Activated T-helper 1 cell treated with anti-CD3 and anti-CD28 coated beads, Interleukin-12 subunit alpha, Interleukin-12 subunit beta, Interleukin-2, Interleukin-4 antibody, amounts not matched to agents 30 ng/mL and 10 ng/mL and 1 ng/mL, durations not matched to agents 14 hours and 24 hours and 36 hours (primary cell): ENCODE measurements at regions of chr14 and their contacts with region 1.

Region 1: DNA sequence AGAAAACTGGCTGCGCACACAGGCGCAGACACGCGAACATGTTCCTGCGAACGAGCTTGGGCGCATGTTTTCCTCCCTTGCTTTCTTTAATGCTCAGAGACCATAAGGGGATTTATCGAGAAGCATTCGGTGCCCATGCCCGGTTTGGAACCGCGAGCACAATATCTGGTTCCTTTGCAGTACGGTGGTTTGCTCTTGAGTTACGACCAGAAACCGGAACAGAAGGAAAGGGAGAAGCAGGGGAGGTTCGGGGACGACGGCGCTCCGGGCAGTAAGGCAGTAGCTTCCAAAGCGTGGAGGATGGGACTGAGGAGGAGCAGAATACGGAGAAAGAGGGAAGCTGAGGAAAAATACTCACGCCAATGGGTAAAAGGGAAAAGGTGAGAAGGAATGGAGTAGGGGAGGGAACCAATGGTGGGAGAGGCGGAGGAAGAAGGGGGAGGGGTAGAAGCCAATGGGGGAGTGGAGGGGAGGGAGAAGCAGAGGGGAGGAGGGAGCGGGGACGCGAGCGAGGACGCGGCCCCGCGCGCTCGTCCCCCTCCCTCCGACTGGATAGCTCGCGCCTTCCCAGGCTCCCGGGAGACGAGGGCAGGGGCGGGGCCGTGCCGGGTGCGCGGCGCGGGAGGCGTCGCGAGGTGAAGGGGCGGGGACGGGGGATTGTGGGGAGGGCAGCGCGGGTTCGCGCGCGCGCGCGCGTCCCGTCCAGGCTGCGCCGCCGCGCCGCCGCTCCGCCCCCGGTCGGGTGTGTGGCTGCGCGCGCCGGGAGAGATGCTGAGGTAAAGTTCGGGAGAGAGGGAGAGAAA is 625 bp upstream of the ARHGAP5 start:
- DNase-seq: peak; percentile 71
- H3K4me3 Mint-ChIP-seq: peak overlapping the region; percentile 96
- H3K27ac Mint-ChIP-seq: peak overlapping the region; percentile 96
- H3K4me1 Mint-ChIP-seq: peaks cover 42% of the 10 kb centered on the region
- H3K27me3 Mint-ChIP-seq: peaks cover 25% of the 10 kb centered on the region

Region 2: DNA sequence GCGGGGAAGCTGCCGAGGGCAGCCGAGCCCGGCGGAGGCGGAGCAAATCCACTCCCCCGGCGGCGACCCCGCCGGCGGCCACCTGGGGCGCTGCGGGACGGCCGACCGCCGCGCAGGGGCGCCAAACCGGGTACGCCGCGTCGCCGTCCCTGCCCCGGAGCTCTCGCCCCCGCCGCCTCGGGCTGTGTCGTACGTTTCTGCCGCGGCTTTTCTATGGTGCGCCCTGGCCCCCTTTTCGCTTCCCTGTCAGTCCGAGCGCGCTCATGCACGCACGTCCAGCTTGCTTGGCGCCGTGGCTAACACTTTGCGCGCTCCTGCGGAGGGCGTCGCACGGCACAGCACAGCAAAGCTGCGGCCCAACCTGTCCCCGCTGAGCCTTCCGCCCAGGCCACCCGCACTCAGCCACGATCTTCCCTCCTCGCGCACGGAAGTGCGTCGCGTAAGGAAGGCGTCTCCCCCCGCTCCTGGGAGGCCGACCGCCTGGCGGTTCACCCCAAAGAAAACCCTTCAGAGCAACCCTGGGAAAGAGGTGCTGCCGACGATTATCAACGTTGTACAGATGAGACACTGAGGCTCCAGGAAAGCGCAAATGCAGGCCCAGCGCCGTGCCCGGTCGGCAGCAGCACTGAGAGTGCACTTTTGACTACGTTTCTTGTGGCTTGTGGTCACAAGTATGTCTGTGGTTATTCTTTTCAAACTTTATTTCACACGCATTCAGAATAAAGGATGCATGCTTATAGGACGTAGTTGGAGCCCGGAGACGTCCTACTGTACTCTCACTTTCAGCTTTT is 868.5 kb before region 1 on chr14 and contains the start of gene HECTD1:
- intact Hi-C with region 1: loop called (anchors 1 kb)
- DNase-seq: peak; percentile 85
- H3K4me3 Mint-ChIP-seq: peak within 1 kb of the TSS; percentile 95
- H3K27ac Mint-ChIP-seq: peak within 1 kb of the TSS; percentile 100
- H3K4me1 Mint-ChIP-seq: peaks cover 45% of the 10 kb centered on the region
- H3K27me3 Mint-ChIP-seq: peaks cover 3% of the 10 kb centered on the region
- total RNA-seq, gene HECTD1: 118 and 127 TPM in 2 replicates

Region 3: GRCh38 chr14:31456841-31457664 is 619.4 kb before region 1 on chr14 and contains the start of gene DTD2:
- intact Hi-C with region 1: loop called (anchors 1 kb)
- DNase-seq: peak; percentile 89
- H3K4me3 Mint-ChIP-seq: peak within 1 kb of the TSS; percentile 96
- H3K27ac Mint-ChIP-seq: peak within 1 kb of the TSS; percentile 95
- H3K4me1 Mint-ChIP-seq: peaks cover 43% of the 10 kb centered on the region
- H3K27me3 Mint-ChIP-seq: peaks cover 2% of the 10 kb centered on the region
- total RNA-seq, gene DTD2: 29.0 and 30.6 TPM in 2 replicates

Region 4: DNA sequence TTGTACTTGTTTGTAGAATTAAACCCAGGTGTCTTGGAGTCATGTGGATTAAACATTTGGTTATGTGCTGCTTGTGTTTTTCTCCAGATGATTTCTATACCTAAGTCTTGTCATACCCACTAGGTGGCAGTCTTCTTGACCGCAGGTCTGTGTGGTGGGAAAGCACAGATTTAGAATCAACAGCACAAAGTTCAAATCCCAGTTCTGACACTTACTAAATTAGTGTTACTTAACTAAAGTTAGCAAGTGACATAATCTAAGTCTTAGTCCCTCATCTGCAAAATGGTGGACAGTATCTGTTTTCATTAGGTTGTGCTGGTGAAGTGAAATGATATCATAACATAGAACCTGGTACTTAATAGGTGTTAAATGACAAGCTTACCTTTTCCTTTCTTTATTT is 150.4 kb before region 1 on chr14:
- intact Hi-C with region 1: loop called (anchors 2 kb)
- DNase-seq: no peak
- H3K4me3 Mint-ChIP-seq: no peak overlapping the region
- H3K27ac Mint-ChIP-seq: no peak overlapping the region
- H3K4me1 Mint-ChIP-seq: peaks cover 10% of the 10 kb centered on the region
- H3K27me3 Mint-ChIP-seq: peaks cover 2% of the 10 kb centered on the region

Region 5: DNA sequence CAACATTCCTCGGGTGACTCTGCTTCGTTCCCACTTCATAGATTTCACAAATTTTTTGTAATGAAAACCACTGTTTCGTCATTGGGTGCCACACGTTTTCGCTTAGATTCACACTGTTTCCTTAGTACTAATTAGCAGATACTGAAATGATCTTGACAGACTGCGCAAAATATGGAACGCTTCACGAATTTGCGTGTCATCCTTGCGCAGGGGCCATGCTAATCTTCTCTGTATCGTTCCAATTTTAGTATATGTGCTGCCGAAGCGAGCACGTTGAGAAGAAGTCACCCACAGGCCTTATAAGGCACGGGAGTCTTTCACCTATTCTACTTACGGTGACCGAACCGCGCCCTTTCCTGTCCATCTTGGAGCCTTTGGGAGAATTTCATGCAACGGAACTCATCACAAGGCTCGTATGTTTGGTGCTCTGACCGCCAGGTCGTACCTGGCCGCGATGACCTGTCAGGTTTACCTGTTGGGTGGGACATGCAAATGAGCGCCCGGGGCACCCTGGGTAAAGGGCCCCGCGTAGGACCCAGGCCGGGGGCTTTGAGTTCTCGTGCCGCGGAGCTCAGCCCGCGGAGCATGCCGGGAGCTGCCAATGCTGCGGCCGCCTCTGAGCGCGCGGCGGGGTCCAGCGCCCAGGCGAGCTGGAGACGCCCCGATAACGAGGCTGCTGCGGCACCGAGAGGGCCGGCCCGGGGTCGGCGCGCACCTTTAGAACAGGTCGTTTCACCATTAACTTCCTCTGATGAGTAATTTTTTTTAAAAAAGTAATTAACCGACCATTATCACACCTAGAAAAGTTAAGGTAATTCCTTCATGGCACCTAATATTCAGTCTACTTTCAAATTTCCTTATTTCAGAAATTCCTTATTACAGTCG is 126.8 kb after region 1 on chr14 and contains the start of gene RNU6-8:
- intact Hi-C with region 1: loop called (anchors 1 kb)
- DNase-seq: peak; percentile 78
- H3K4me3 Mint-ChIP-seq: peak within 1 kb of the TSS; percentile 87
- H3K27ac Mint-ChIP-seq: peak within 1 kb of the TSS; percentile 91
- H3K4me1 Mint-ChIP-seq: peaks cover 49% of the 10 kb centered on the region
- H3K27me3 Mint-ChIP-seq: peaks cover 2% of the 10 kb centered on the region
- total RNA-seq, gene RNU6-8: not detected in 2 replicates

Region 6: GRCh38 chr14:32494609-32495434 is 418.3 kb after region 1 on chr14:
- intact Hi-C with region 1: no loop called
- DNase-seq: no peak
- H3K4me3 Mint-ChIP-seq: no peak overlapping the region
- H3K27ac Mint-ChIP-seq: no peak overlapping the region
- H3K4me1 Mint-ChIP-seq: no peaks in the 10 kb centered on the region
- H3K27me3 Mint-ChIP-seq: peaks cover 5% of the 10 kb centered on the region

Region 7: GRCh38 chr14:34043627-34044372 is 1967.3 kb after region 1 on chr14:
- intact Hi-C with region 1: loop called (anchors 10 kb)
- DNase-seq: peak; percentile 91
- H3K4me3 Mint-ChIP-seq: peak overlapping the region; percentile 71
- H3K27ac Mint-ChIP-seq: peak overlapping the region; percentile 87
- H3K4me1 Mint-ChIP-seq: peaks cover 70% of the 10 kb centered on the region
- H3K27me3 Mint-ChIP-seq: no peaks in the 10 kb centered on the region